Prostate gland (tissue), 2 donors: ENCODE measurements at regions of chr18 and their contacts with region 1.

Region 1: GRCh38 chr18:67766930-67767329 is 250.4 kb upstream of the DSEL start:
- DNase-seq: no peak
- H3K4me3 ChIP-seq: no peak overlapping the region
- H3K27ac ChIP-seq: no peak overlapping the region
- H3K4me1 ChIP-seq: no peaks in the 10 kb centered on the region
- H3K27me3 ChIP-seq: no peaks in the 10 kb centered on the region
- CTCF ChIP-seq: no peak
- POLR2A ChIP-seq: no peak

Region 2: GRCh38 chr18:67805261-67805660 is 38.3 kb after region 1 on chr18:
- intact Hi-C with region 1: loop called (anchors 5 kb)
- DNase-seq: no peak
- H3K4me3 ChIP-seq: no peak overlapping the region
- H3K27ac ChIP-seq: no peak overlapping the region
- H3K4me1 ChIP-seq: no peaks in the 10 kb centered on the region
- H3K27me3 ChIP-seq: no peaks in the 10 kb centered on the region
- CTCF ChIP-seq: no peak
- POLR2A ChIP-seq: no peak